T-cell (primary cell): ENCODE measurements at regions of chr6 and their contacts with region 1.

Region 1: GRCh38 chr6:36929607-36930006 is 24.9 kb upstream of the PI16 start:
- DNase-seq: no peak
- ATAC-seq: no peak
- H3K4me3 ChIP-seq: no peak overlapping the region
- H3K4me3 Mint-ChIP-seq: no peak overlapping the region
- H3K27ac ChIP-seq: no peak overlapping the region
- H3K27ac Mint-ChIP-seq: no peak overlapping the region
- H3K4me1 ChIP-seq: peaks cover 0 to 5% of the 10 kb centered on the region in 2 experiments
- H3K4me1 Mint-ChIP-seq: peaks cover 0 to 6% (median 2%) of the 10 kb centered on the region in 3 donors
- H3K27me3 ChIP-seq: no peaks in the 10 kb centered on the region
- H3K27me3 Mint-ChIP-seq: no peaks in the 10 kb centered on the region

Region 2: DNA sequence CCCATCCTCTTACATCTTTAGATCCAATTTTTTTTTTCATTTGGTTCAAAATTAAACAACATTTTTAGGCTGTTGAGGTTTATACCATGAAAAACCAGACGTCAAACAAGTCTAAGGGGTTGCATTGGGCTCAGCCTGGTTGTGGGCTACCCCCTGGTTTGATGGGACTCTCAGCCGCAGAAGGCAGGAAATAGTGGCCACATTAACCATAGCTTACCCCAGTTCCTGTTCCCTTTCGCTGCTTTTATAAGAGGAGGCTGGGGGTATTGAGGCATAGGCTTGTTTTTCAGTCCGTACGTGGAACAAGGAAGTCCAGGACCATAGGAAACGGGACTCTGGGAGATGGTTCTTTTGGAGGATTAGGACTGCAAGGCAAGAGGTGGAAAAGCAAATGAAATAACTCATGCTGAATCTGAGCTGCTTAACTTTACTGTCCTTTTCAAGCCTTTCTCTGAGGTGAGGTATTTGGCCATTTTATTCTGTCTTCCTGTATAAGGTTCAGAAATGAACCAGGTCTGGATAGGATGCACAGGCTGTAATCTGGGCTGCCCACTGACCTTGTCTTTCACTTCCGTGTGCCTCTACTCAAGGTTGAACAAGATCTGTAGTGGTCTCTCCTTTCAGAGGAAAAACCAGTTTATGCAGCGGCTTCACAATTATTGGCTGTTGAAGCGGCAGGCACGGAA is 725.4 kb before region 1 on chr6:
- CTCF ChIA-PET with region 1: no interaction called
- POLR2A ChIA-PET with region 1: interaction called in 1 of 2 experiments, 11 read pairs
- DNase-seq: peak in 33 of 35 experiments; percentile 45 to 81 (median 65)
- ATAC-seq: peak; percentile 87 to 100 (median 96)
- H3K4me3 ChIP-seq: peak overlapping the region; percentile 11 to 29
- H3K4me3 Mint-ChIP-seq: peak overlapping the region; percentile 32 to 70 (median 56)
- H3K27ac ChIP-seq: no peak overlapping the region
- H3K27ac Mint-ChIP-seq: peak overlapping the region; percentile 58 to 72
- H3K4me1 ChIP-seq: peaks cover 25 to 50% of the 10 kb centered on the region in 2 experiments
- H3K4me1 Mint-ChIP-seq: peaks cover 63 to 78% (median 72%) of the 10 kb centered on the region in 3 donors
- H3K27me3 ChIP-seq: no peaks in the 10 kb centered on the region
- H3K27me3 Mint-ChIP-seq: no peaks in the 10 kb centered on the region

Region 3: GRCh38 chr6:36248980-36249379 is 680.6 kb before region 1 on chr6:
- CTCF ChIA-PET with region 1: no interaction called
- POLR2A ChIA-PET with region 1: no interaction called
- DNase-seq: no peak
- ATAC-seq: no peak
- H3K4me3 ChIP-seq: no peak overlapping the region
- H3K4me3 Mint-ChIP-seq: no peak overlapping the region
- H3K27ac ChIP-seq: no peak overlapping the region
- H3K27ac Mint-ChIP-seq: no peak overlapping the region
- H3K4me1 ChIP-seq: peaks cover 0 to 4% of the 10 kb centered on the region in 2 experiments
- H3K4me1 Mint-ChIP-seq: peaks cover 0 to 9% (median 6%) of the 10 kb centered on the region in 3 donors
- H3K27me3 ChIP-seq: no peaks in the 10 kb centered on the region
- H3K27me3 Mint-ChIP-seq: no peaks in the 10 kb centered on the region